CD4-positive, alpha-beta memory T cell (primary cell): ENCODE measurements at regions of chr6 and their contacts with region 1.

Region 1: DNA sequence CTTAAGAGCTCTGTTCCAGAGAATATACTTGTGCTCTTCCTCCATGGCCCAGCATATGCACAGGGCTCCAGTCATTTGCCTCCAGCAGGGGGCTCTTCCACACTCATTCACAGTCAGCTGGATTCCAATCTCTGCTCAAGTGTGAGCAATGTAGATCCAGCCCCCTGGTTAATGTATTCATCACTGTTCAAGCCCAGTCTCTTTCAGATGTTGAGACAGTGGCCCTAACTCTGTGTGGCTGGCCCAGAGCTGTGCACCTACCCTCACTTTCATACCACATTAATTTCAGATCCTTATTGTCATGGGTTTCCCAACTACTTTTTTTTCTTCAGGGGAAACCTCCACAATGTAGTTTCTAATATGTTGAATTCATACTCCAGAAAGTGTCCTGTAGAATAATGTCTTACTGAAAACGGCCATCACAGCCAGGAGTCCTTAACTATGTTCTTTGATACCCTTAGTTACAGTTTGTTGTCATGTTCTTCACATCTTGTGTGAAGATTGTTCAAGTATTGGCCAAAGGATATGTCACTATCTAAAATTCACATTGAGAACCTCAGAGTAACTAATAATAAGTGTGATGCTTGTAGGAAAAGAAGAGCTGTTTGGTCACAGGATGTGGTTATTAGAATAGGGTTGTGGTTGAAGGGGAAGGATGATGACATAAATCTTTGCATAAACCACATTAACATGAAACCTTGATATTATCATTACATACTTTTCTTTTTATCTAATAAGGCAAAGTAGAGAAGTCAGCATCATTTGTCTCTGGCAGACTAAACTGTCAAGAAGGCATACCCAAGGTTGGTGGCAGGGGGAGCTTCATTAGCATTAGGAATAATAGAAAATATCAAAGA is 14.4 kb upstream of the HLA-DQA1 start:
- DNase-seq: peak; percentile 71 to 90 (median 86)
- H3K4me3 ChIP-seq: peak overlapping the region in 1 of 2 donors; percentile 30
- H3K4me3 Mint-ChIP-seq: peak overlapping the region; percentile 28 to 75 (median 71)
- H3K27ac ChIP-seq: peak overlapping the region; percentile 85
- H3K27ac Mint-ChIP-seq: peak overlapping the region; percentile 82 to 99 (median 95)
- H3K4me1 ChIP-seq: peaks cover 53% of the 10 kb centered on the region
- H3K4me1 Mint-ChIP-seq: peaks cover 37 to 68% (median 44%) of the 10 kb centered on the region in 4 donors
- H3K27me3 ChIP-seq: no peaks in the 10 kb centered on the region
- H3K27me3 Mint-ChIP-seq: no peaks in the 10 kb centered on the region

Region 2: GRCh38 chr6:32255199-32256153 is 367.3 kb before region 1 on chr6:
- CTCF ChIA-PET with region 1: no interaction called
- POLR2A ChIA-PET with region 1: no interaction called
- intact Hi-C with region 1: no loop called
- DNase-seq: peak; percentile 34 to 68 (median 40)
- H3K4me3 ChIP-seq: peak overlapping the region in 1 of 2 donors; percentile 40
- H3K4me3 Mint-ChIP-seq: peak overlapping the region; percentile 67 to 83 (median 74)
- H3K27ac ChIP-seq: no peak overlapping the region
- H3K27ac Mint-ChIP-seq: peak overlapping the region in 4 of 7 donors; percentile 44 to 82 (median 60)
- H3K4me1 ChIP-seq: peaks cover 15% of the 10 kb centered on the region
- H3K4me1 Mint-ChIP-seq: peaks cover 14 to 26% (median 18%) of the 10 kb centered on the region in 4 donors
- H3K27me3 ChIP-seq: no peaks in the 10 kb centered on the region
- H3K27me3 Mint-ChIP-seq: no peaks in the 10 kb centered on the region

Region 3: DNA sequence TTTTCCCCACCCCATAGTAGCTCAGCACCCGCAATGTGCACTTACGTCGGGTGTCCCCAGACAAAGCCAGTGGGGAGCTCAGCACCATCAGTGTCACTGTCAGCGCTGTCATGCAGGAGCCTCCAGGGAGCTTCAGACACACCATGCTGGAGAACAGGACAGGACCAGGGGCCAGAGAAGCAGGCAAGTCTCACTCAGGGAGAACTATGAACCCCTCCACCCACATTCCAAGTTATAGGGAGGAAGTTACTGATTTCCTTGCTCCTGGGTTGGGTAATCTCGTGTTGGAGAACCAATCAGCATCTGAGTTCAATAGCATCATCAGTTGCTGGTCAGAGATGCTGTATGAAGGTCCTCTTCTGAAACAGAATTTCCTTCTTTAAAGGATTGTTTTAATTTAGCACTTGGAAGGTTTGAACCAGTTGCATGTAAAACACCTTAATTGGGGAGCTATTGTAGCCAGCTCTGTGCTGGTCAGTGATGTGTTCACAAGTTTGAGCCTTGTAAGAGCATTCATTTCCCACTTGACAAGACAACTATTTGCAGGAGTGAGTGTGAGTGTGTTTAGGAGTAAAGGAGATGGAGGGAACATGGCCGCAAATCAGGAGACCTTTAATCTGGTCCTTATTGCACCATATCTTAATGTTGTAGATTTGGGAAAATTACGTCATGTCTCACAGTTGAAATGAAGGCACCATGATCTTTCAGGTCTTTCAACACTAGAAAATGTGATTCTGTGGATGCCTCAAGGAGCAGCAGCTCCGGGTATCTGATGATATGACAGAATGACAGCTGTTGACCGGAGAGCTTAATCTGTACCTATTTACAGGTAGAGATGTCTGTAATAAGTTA is 32.9 kb before region 1 on chr6 and contains the start of gene HLA-DRB1:
- CTCF ChIA-PET with region 1: interaction called, 3 read pairs
- POLR2A ChIA-PET with region 1: interaction called, 9 read pairs
- intact Hi-C with region 1: loop called (anchors 2 kb)
- DNase-seq: peak in 3 of 5 donors; percentile 30 to 55 (median 47)
- H3K4me3 ChIP-seq: peak within 1 kb of the TSS in 1 of 2 donors; percentile 26
- H3K4me3 Mint-ChIP-seq: peak within 1 kb of the TSS in 7 of 8 donors; percentile 46 to 89 (median 72)
- H3K27ac ChIP-seq: peak within 1 kb of the TSS; percentile 43
- H3K27ac Mint-ChIP-seq: peak within 1 kb of the TSS in 5 of 7 donors; percentile 7 to 95 (median 48)
- H3K4me1 ChIP-seq: no peaks in the 10 kb centered on the region
- H3K4me1 Mint-ChIP-seq: peaks cover 0 to 31% (median 16%) of the 10 kb centered on the region in 4 donors
- H3K27me3 ChIP-seq: no peaks in the 10 kb centered on the region
- H3K27me3 Mint-ChIP-seq: peaks cover 3 to 6% of the 10 kb centered on the region in 2 donors
- total RNA-seq, gene HLA-DRB1: 14.2 to 14.3 TPM

Region 4: DNA sequence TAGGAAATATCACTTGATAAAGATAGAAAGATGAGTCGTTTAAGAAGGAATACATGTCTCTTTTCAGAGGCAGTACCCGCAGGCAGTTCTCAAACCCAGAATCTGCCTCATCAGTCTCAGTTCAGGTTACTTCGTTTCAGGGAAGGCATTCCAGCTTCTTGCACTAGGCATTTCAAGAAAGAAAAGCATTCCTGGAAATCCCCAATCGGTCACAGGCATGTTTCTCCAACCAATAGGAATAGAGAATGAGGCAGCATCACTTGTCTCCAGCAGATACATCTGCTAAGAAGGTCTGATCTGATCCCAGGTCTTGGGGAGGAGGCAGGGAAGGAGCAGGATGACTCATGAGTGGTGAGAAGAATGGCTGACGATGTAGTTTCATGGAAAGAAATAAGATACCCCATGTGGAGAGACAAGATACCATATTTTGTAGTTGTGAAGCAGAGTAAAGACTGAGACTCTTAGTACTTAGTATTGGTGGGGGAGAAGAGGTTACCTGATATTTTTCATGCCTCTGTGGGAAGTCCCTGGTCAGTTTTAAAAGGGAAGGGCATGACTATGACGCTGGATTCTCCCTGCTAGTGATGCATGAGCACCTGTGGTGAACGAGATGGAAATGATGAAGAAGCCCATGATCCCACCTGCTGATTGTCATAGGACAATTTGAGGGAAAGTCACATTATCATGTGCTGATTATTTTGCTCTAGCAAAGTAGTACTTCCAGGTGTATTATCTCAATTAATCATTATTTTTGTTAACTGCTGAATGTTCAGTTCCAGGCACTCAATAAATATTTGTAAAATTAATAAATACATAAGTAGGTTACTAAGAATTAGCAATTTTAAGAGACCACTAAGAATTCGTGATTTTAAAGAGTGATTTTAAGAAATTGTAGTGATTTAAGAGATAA is 12.8 kb before region 1 on chr6:
- CTCF ChIA-PET with region 1: interaction called, 5 read pairs
- POLR2A ChIA-PET with region 1: interaction called, 3 read pairs
- intact Hi-C with region 1: loop called (anchors 1 kb)
- DNase-seq: peak; percentile 61 to 77 (median 71)
- H3K4me3 ChIP-seq: peak overlapping the region in 1 of 2 donors; percentile 12
- H3K4me3 Mint-ChIP-seq: no peak overlapping the region
- H3K27ac ChIP-seq: peak overlapping the region; percentile 67
- H3K27ac Mint-ChIP-seq: peak overlapping the region in 1 of 7 donors; percentile 50
- H3K4me1 ChIP-seq: peaks cover 15% of the 10 kb centered on the region
- H3K4me1 Mint-ChIP-seq: peaks cover 0 to 5% (median 2%) of the 10 kb centered on the region in 4 donors
- H3K27me3 ChIP-seq: no peaks in the 10 kb centered on the region
- H3K27me3 Mint-ChIP-seq: no peaks in the 10 kb centered on the region

Region 5: GRCh38 chr6:32642720-32643106 is 19.9 kb after region 1 on chr6:
- CTCF ChIA-PET with region 1: no interaction called
- POLR2A ChIA-PET with region 1: no interaction called
- intact Hi-C with region 1: no loop called
- DNase-seq: no peak
- H3K4me3 ChIP-seq: no peak overlapping the region
- H3K4me3 Mint-ChIP-seq: no peak overlapping the region
- H3K27ac ChIP-seq: no peak overlapping the region
- H3K27ac Mint-ChIP-seq: no peak overlapping the region
- H3K4me1 ChIP-seq: peaks cover 11% of the 10 kb centered on the region
- H3K4me1 Mint-ChIP-seq: peaks cover 16 to 20% (median 18%) of the 10 kb centered on the region in 4 donors
- H3K27me3 ChIP-seq: no peaks in the 10 kb centered on the region
- H3K27me3 Mint-ChIP-seq: no peaks in the 10 kb centered on the region

Region 6: GRCh38 chr6:32666420-32667300 is 43.9 kb after region 1 on chr6 and contains the start of gene HLA-DQB1:
- CTCF ChIA-PET with region 1: interaction called, 3 read pairs
- POLR2A ChIA-PET with region 1: interaction called, 15 read pairs
- intact Hi-C with region 1: loop called (anchors 2 kb)
- DNase-seq: peak; percentile 9 to 75 (median 67)
- H3K4me3 ChIP-seq: peak within 1 kb of the TSS; percentile 42 to 48
- H3K4me3 Mint-ChIP-seq: peak within 1 kb of the TSS; percentile 74 to 92 (median 88)
- H3K27ac ChIP-seq: peak within 1 kb of the TSS; percentile 67
- H3K27ac Mint-ChIP-seq: peak within 1 kb of the TSS; percentile 43 to 96 (median 93)
- H3K4me1 ChIP-seq: peaks cover 30% of the 10 kb centered on the region
- H3K4me1 Mint-ChIP-seq: peaks cover 28 to 63% (median 49%) of the 10 kb centered on the region in 4 donors
- H3K27me3 ChIP-seq: no peaks in the 10 kb centered on the region
- H3K27me3 Mint-ChIP-seq: peaks cover 9 to 14% of the 10 kb centered on the region in 2 donors
- total RNA-seq, gene HLA-DQB1: 6.3 to 9.9 TPM

Region 7: GRCh38 chr6:32685603-32686002 is 62.8 kb after region 1 on chr6:
- CTCF ChIA-PET with region 1: interaction called, 10 read pairs
- POLR2A ChIA-PET with region 1: interaction called, 6 read pairs
- intact Hi-C with region 1: loop called (anchors 1 kb)
- DNase-seq: peak; percentile 78 to 89 (median 81)
- H3K4me3 ChIP-seq: no peak overlapping the region
- H3K4me3 Mint-ChIP-seq: peak overlapping the region in 7 of 8 donors; percentile 22 to 83 (median 59)
- H3K27ac ChIP-seq: peak overlapping the region; percentile 20
- H3K27ac Mint-ChIP-seq: peak overlapping the region; percentile 25 to 89 (median 86)
- H3K4me1 ChIP-seq: peaks cover 31% of the 10 kb centered on the region
- H3K4me1 Mint-ChIP-seq: peaks cover 18 to 37% (median 29%) of the 10 kb centered on the region in 4 donors
- H3K27me3 ChIP-seq: no peaks in the 10 kb centered on the region
- H3K27me3 Mint-ChIP-seq: peaks cover 0 to 3% of the 10 kb centered on the region in 2 donors

Region 8: DNA sequence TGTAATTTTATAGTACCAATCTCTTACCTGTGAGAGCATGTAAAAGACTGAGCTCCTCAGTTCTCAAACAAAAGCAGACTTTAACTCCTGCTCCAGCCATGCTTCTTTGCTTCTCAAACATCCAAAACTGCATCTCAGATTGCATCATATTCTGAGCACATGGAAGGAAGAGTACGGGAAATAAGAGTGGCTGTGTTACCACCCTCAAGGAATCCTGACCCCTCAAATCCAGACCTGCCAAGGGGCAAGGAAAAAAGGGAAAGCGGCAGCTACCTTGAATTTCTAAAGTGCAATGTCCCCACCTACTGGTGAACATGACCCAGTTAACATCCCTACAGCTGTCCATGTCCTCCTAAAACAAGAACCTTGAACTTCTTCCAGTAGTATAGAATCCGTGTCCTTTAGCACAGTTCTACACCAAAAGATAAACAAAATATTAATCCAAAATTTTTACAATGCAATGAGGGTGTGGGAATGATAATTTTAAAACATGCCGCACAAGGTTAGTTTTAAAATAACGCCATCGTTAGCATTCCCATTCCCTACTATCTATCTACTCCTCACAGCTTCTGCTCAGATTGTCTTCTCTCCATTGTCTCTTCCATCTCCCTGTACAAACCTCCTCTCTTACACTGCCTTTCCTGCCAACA is 77.7 kb after region 1 on chr6:
- CTCF ChIA-PET with region 1: interaction called, 6 read pairs
- POLR2A ChIA-PET with region 1: interaction called, 4 read pairs
- intact Hi-C with region 1: loop called (anchors 1 kb)
- DNase-seq: peak in 4 of 5 donors; percentile 29 to 45 (median 38)
- H3K4me3 ChIP-seq: no peak overlapping the region
- H3K4me3 Mint-ChIP-seq: peak overlapping the region in 2 of 8 donors; percentile 35 to 58
- H3K27ac ChIP-seq: no peak overlapping the region
- H3K27ac Mint-ChIP-seq: peak overlapping the region in 1 of 7 donors; percentile 90
- H3K4me1 ChIP-seq: no peaks in the 10 kb centered on the region
- H3K4me1 Mint-ChIP-seq: peaks cover 0 to 4% (median 1%) of the 10 kb centered on the region in 4 donors
- H3K27me3 ChIP-seq: peaks cover 9% of the 10 kb centered on the region
- H3K27me3 Mint-ChIP-seq: peaks cover 24 to 26% of the 10 kb centered on the region in 2 donors

Region 9: DNA sequence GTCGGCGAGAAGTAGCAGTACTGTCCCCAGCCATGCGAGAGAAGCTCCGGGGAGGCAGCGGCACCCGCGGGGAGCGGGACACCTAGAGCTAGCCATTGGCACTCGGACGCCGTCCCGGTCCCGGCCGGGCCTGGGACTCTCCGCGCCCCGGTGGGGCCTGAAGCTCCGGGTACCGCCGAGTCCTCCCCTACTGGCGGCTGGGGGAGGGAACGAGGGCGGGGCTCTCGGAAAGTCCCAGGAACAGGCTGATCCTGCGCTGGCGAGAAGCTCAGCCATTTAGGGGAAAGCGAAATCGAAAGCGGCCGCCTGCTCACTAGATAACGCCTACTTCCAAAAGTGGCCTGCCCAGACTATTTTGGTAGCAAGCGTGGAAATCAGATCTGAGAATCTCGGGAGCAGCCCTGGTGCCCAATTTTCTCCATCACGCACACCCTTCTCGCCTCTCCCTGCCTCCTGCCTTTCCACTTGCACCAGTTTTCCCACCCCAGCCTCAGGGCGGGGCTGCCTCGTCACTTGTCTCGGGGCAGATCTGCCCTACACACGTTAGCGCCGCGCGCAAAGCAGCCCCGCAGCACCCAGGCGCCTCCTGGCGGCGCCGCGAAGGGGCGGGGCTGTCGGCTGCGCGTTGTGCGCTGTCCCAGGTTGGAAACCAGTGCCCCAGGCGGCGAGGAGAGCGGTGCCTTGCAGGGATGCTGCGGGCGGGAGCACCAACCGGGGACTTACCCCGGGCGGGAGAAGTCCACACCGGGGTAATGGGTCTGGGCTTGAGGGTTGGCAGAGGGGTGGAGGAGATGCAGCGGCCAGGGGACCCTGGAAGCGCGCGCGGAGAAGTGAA is 231.0 kb after region 1 on chr6 and contains the starts of genes PSMB9 and TAP1:
- CTCF ChIA-PET with region 1: no interaction called
- POLR2A ChIA-PET with region 1: no interaction called
- intact Hi-C with region 1: loop called (anchors 10 kb)
- DNase-seq: peak; percentile 94 to 98 (median 96)
- H3K4me3 ChIP-seq: peak within 1 kb of the TSS; percentile 93 to 98
- H3K4me3 Mint-ChIP-seq: peak within 1 kb of the TSS; percentile 98 to 100 (median 99)
- H3K27ac ChIP-seq: peak within 1 kb of the TSS; percentile 100
- H3K27ac Mint-ChIP-seq: peak within 1 kb of the TSS; percentile 99 to 100 (median 100)
- H3K4me1 ChIP-seq: peaks cover 76% of the 10 kb centered on the region
- H3K4me1 Mint-ChIP-seq: peaks cover 57 to 92% (median 66%) of the 10 kb centered on the region in 4 donors
- H3K27me3 ChIP-seq: no peaks in the 10 kb centered on the region
- H3K27me3 Mint-ChIP-seq: no peaks in the 10 kb centered on the region
- total RNA-seq, gene PSMB9: 141 to 144 TPM
- total RNA-seq, gene TAP1: 136 to 141 TPM

Region 10: GRCh38 chr6:33091957-33092356 is 469.2 kb after region 1 on chr6:
- CTCF ChIA-PET with region 1: no interaction called
- POLR2A ChIA-PET with region 1: no interaction called
- intact Hi-C with region 1: no loop called
- DNase-seq: peak in 4 of 5 donors; percentile 33 to 41 (median 36)
- H3K4me3 ChIP-seq: no peak overlapping the region
- H3K4me3 Mint-ChIP-seq: no peak overlapping the region
- H3K27ac ChIP-seq: no peak overlapping the region
- H3K27ac Mint-ChIP-seq: no peak overlapping the region
- H3K4me1 ChIP-seq: no peaks in the 10 kb centered on the region
- H3K4me1 Mint-ChIP-seq: no peaks in the 10 kb centered on the region
- H3K27me3 ChIP-seq: no peaks in the 10 kb centered on the region
- H3K27me3 Mint-ChIP-seq: peaks cover 9 to 29% of the 10 kb centered on the region in 2 donors